ENCODE measurements at regions of chr5 and their contacts with region 1.

Region 1: DNA sequence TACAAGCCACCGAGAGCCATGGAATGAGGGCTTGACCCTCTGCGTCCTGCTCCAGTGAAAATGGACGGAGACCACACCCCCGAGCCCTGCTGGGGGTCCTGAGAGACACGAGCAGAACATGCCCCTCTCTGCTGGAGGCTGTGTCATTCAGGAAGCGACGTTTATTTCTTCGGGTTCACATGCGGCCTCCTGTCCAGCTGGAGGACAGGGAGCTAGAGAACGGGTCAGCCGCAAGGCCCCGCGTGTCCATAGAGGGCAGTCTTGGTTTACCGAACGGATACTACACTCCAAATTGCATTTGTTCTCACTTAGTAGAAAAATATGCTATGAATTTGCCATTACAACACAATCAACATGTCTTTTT is 36.1 kb downstream of the MRPL36 start:
- DNase-seq: peak in 1 of 2 experiments; percentile 64
- H3K4me3 ChIP-seq: no peak overlapping the region
- H3K27ac ChIP-seq: no peak overlapping the region
- H3K4me1 ChIP-seq: peaks cover 0 to 6% (median 0%) of the 10 kb centered on the region in 4 experiments; a peak in 5 of 7 replicates
- H3K27me3 ChIP-seq: no peaks in the 10 kb centered on the region; a peak in 1 of 7 replicates
- CTCF ChIP-seq: peak; percentile 55 to 90 (median 84)
- EP300 ChIP-seq: no peak
- POLR2A ChIP-seq: no peak
- RAD21 ChIP-seq: peak; percentile 85 to 87

Region 2: GRCh38 chr5:1315709-1316587 is 447.6 kb before region 1 on chr5:
- CTCF ChIA-PET with region 1: no interaction called
- POLR2A ChIA-PET with region 1: no interaction called
- DNase-seq: no peak
- H3K4me3 ChIP-seq: peak overlapping the region in 1 of 4 experiments; percentile 32; a peak in 2 of 8 replicates
- H3K27ac ChIP-seq: no peak overlapping the region; the same call in 1 of the 2 replicates
- H3K4me1 ChIP-seq: peaks cover 11 to 17% (median 14%) of the 10 kb centered on the region in 4 experiments
- H3K27me3 ChIP-seq: no peaks in the 10 kb centered on the region
- CTCF ChIP-seq: no peak
- EP300 ChIP-seq: no peak
- POLR2A ChIP-seq: peak in 1 of 2 experiments; percentile 31; a peak in 1 of 3 replicates
- RAD21 ChIP-seq: no peak

Region 3: DNA sequence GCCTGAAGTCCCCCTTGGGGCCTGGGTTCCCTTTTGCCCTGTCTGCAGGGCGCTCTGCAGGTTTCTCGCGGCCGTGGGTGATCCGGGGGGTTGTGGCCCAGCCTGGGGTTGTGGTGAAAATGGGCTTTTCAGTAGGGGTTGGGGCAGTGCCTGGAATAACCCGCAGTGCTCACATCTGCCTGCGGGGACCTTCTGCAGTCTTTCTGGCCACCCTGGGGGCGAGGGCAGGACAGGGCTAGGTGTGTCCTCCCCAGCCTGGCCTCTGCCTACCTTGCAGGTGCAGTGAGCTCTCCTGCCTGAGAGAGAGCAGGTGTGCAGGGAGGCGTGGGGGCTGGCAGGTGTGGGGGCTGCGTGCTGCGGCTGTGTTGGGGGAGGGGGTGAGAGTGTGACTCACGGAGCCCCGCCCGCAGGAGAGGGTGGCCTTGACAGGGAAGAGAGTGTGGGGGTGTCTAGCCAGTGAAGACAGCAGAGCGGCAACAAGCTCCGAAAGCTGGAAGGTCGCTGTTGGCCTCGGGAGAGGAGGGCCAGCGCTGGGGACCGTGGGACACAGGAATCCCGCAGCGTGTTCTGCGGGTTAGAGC is 95.3 kb before region 1 on chr5:
- CTCF ChIA-PET with region 1: interaction called, 12 read pairs
- POLR2A ChIA-PET with region 1: no interaction called
- DNase-seq: no peak
- H3K4me3 ChIP-seq: peak overlapping the region; percentile 39 to 69 (median 49); a peak in 6 of 8 replicates
- H3K27ac ChIP-seq: no peak overlapping the region
- H3K4me1 ChIP-seq: peaks cover 0 to 20% (median 8%) of the 10 kb centered on the region in 4 experiments; a peak in 5 of 7 replicates
- H3K27me3 ChIP-seq: peaks cover 2 to 36% (median 23%) of the 10 kb centered on the region in 4 experiments
- CTCF ChIP-seq: no peak
- EP300 ChIP-seq: no peak
- POLR2A ChIP-seq: no peak
- RAD21 ChIP-seq: no peak

Region 4: DNA sequence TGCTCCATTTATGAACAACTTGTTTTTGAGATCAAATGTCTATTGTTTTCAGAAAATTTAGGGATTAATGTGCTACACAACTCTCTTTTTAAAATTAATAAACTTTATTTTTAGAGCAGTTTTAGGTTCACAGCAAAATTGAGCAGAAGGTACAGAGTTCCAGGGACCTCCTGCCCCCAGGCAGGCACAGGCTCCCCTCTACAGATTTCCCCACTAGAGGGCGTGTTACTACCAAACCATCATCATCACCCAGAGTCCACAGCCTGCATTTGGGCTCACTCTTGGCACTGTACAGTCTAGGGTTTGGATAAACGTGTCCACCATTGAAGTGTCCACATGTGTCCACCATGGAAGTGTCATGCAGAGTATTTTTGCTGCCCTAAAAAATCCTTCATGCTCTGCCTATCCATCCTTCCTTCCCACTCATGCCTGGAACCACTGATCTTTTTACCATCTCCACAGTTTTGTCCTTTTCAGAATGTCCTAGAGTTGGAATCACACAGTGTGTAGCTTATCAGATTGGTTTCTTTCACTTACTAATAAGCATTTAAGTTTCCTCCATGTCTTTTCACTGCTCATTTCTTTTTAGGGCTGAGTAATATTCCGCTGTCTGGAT is 25.6 kb before region 1 on chr5:
- CTCF ChIA-PET with region 1: interaction called, 27 read pairs
- POLR2A ChIA-PET with region 1: no interaction called
- DNase-seq: peak in 1 of 2 experiments; percentile 61
- H3K4me3 ChIP-seq: no peak overlapping the region
- H3K27ac ChIP-seq: no peak overlapping the region
- H3K4me1 ChIP-seq: no peaks in the 10 kb centered on the region; a peak in 1 of 7 replicates
- H3K27me3 ChIP-seq: no peaks in the 10 kb centered on the region
- CTCF ChIP-seq: peak in 2 of 3 experiments; percentile 71 to 77; a peak in 3 of 4 replicates
- EP300 ChIP-seq: no peak
- POLR2A ChIP-seq: no peak
- RAD21 ChIP-seq: peak; percentile 66 to 72

Region 5: GRCh38 chr5:1751016-1751878 is 12.3 kb before region 1 on chr5:
- CTCF ChIA-PET with region 1: interaction called, 25 read pairs
- POLR2A ChIA-PET with region 1: no interaction called
- DNase-seq: peak in 1 of 2 experiments; percentile 47
- H3K4me3 ChIP-seq: no peak overlapping the region
- H3K27ac ChIP-seq: no peak overlapping the region
- H3K4me1 ChIP-seq: peaks cover 0 to 6% (median 3%) of the 10 kb centered on the region in 4 experiments; a peak in 2 of 7 replicates
- H3K27me3 ChIP-seq: no peaks in the 10 kb centered on the region
- CTCF ChIP-seq: no peak
- EP300 ChIP-seq: no peak
- POLR2A ChIP-seq: no peak
- RAD21 ChIP-seq: no peak

Region 6: GRCh38 chr5:1789834-1790471 is 26.4 kb after region 1 on chr5:
- CTCF ChIA-PET with region 1: interaction called, 17 read pairs
- POLR2A ChIA-PET with region 1: interaction called, 3 read pairs
- DNase-seq: no peak
- H3K4me3 ChIP-seq: no peak overlapping the region
- H3K27ac ChIP-seq: no peak overlapping the region
- H3K4me1 ChIP-seq: peaks cover 0 to 15% (median 12%) of the 10 kb centered on the region in 4 experiments; a peak in 5 of 7 replicates
- H3K27me3 ChIP-seq: no peaks in the 10 kb centered on the region
- CTCF ChIP-seq: no peak
- EP300 ChIP-seq: no peak
- POLR2A ChIP-seq: no peak
- RAD21 ChIP-seq: no peak

Region 7: GRCh38 chr5:1855596-1855995 is 92.1 kb after region 1 on chr5:
- CTCF ChIA-PET with region 1: interaction called, 10 read pairs
- POLR2A ChIA-PET with region 1: no interaction called
- DNase-seq: no peak
- H3K4me3 ChIP-seq: no peak overlapping the region
- H3K27ac ChIP-seq: no peak overlapping the region
- H3K4me1 ChIP-seq: peaks cover 0 to 11% (median 7%) of the 10 kb centered on the region in 4 experiments; a peak in 5 of 7 replicates
- H3K27me3 ChIP-seq: peaks cover 8 to 65% (median 45%) of the 10 kb centered on the region in 4 experiments
- CTCF ChIP-seq: no peak
- EP300 ChIP-seq: no peak
- POLR2A ChIP-seq: no peak
- RAD21 ChIP-seq: no peak

Region 8: GRCh38 chr5:2282034-2282690 is 518.6 kb after region 1 on chr5:
- CTCF ChIA-PET with region 1: no interaction called
- POLR2A ChIA-PET with region 1: no interaction called
- DNase-seq: no peak
- H3K4me3 ChIP-seq: no peak overlapping the region
- H3K27ac ChIP-seq: no peak overlapping the region
- H3K4me1 ChIP-seq: no peaks in the 10 kb centered on the region
- H3K27me3 ChIP-seq: no peaks in the 10 kb centered on the region; a peak in 1 of 7 replicates
- CTCF ChIP-seq: no peak
- EP300 ChIP-seq: no peak
- POLR2A ChIP-seq: no peak
- RAD21 ChIP-seq: no peak